ENCODE measurements at regions of chr4 and their contacts with region 1.

Region 1: GRCh38 chr4:99986792-99987191 is 36.7 kb upstream of the H2AZ1 start:
- DNase-seq: no peak
- H3K4me3 ChIP-seq: no peak overlapping the region
- H3K27me3 ChIP-seq: no peaks in the 10 kb centered on the region
- CTCF ChIP-seq: no peak

Region 2: GRCh38 chr4:100017637-100018310 is 31.0 kb after region 1 on chr4:
- CTCF ChIA-PET with region 1: no interaction called
- POLR2A ChIA-PET with region 1: interaction called, 10 read pairs
- DNase-seq: no peak
- H3K4me3 ChIP-seq: no peak overlapping the region
- H3K27me3 ChIP-seq: peaks cover 2% of the 10 kb centered on the region; the same call in 1 of the 2 replicates
- CTCF ChIP-seq: no peak